Gastrocnemius medialis (tissue), 4 donors: ENCODE measurements at regions of chr18 and their contacts with region 1.

Region 1: GRCh38 chr18:68660354-68661183 is 54.3 kb downstream of the TMX3 start:
- DNase-seq: no peak
- ATAC-seq: no peak
- H3K4me3 ChIP-seq: no peak overlapping the region
- H3K27ac ChIP-seq: no peak overlapping the region
- H3K4me1 ChIP-seq: no peaks in the 10 kb centered on the region
- H3K27me3 ChIP-seq: no peaks in the 10 kb centered on the region
- CTCF ChIP-seq: peak in 4 of 5 experiments; percentile 22 to 45 (median 29)
- POLR2A ChIP-seq: no peak

Region 2: GRCh38 chr18:67217551-67218166 is 1442.9 kb before region 1 on chr18:
- in situ Hi-C with region 1: loop called in 3 of 4 experiments (anchors 10 to 25 kb)
- intact Hi-C with region 1: loop called (anchors 5 kb)
- DNase-seq: no peak
- ATAC-seq: peak in 1 of 2 donors; percentile 74
- H3K4me3 ChIP-seq: no peak overlapping the region
- H3K27ac ChIP-seq: no peak overlapping the region
- H3K4me1 ChIP-seq: no peaks in the 10 kb centered on the region
- H3K27me3 ChIP-seq: no peaks in the 10 kb centered on the region
- CTCF ChIP-seq: peak; percentile 67 to 86 (median 78)
- POLR2A ChIP-seq: no peak